Tibial artery (tissue), 4 donors: ENCODE measurements at regions of chr6 and their contacts with region 1.

Region 1: DNA sequence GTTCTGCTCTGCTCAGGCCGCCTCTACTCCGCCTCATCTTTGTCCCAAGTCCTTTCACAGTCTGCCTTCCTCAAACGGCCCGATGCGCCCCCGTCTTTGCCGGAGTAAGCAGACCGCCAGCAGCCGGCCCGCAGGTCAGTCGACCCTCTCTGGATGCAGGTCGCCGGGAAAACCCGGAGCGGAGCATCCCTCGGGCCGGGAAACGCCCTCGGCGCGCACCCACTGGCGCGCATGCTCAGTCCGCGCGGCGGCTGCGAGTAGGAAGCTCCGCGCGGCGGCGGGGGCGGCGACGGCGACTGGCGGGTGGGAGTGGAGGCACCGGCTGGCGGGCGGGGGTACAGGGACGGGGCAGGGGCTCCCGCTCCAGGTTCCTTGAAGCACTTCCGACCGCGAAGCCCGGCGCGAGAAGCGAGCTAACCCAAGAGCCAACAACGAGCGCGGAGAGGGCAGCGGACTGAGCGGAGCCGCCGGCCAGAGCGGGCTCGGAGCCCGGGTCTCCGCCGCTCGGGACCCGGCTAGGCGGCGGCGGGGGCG is at the start of gene LRRC1:
- DNase-seq: peak; percentile 88 to 94
- H3K4me3 ChIP-seq: peak within 1 kb of the TSS; percentile 83 to 92
- H3K27ac ChIP-seq: peak within 1 kb of the TSS; percentile 89
- H3K4me1 ChIP-seq: peaks cover 0 to 43% (median 17%) of the 10 kb centered on the region in 4 donors
- H3K27me3 ChIP-seq: no peaks in the 10 kb centered on the region
- CTCF ChIP-seq: no peak

Region 2: DNA sequence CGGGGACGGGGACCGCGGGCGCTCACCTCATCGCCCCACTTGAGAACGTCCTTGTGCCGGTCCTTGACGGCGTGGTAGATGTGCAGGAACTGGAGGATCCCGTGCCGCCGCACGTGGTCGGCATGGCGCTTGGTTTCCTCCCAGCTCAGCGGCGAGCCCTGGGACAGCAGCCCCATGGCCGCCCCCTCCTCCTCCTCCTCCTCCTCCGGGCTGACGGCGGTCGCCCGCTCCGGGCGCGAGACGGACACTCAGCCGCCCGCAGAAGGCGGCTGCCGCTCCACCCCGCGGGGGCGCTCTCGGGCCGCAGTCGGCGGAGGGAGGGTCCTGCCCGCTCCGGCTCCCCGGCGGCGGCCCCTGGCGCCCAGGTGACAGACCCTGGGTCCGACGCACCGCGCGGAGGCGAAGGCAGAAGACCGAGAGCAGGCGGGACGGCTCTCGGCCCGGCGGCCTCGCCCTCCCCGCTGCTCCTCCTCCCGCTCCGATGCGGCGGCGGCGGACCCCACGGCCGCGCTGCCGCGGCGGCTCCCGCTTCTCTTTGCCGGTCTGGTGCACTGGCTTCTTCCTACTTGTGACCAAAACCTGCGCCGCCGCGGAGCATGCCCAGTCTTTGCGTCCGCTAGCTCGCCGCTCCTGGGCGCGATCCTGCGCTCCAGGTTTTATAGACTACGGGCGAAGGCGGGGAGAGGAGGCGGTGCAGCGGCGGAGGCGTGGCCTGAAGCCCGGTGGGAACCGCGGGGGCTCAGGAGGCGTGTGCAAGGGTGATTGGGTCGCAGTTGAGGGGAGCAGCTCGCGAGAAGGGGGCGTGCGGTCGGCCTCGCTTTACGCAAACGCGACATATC is 250.1 kb before region 1 on chr6 and contains the start of gene GCLC:
- intact Hi-C with region 1: loop called (anchors 5 kb)
- DNase-seq: peak; percentile 96 to 97
- H3K4me3 ChIP-seq: peak within 1 kb of the TSS; percentile 80 to 97
- H3K27ac ChIP-seq: peak within 1 kb of the TSS; percentile 91 to 95
- H3K4me1 ChIP-seq: peaks cover 0 to 42% (median 19%) of the 10 kb centered on the region in 4 donors
- H3K27me3 ChIP-seq: no peaks in the 10 kb centered on the region
- CTCF ChIP-seq: peak; percentile 57 to 67

Region 3: GRCh38 chr6:53956804-53957203 is 162.0 kb after region 1 on chr6:
- intact Hi-C with region 1: loop called (anchors 1 kb)
- DNase-seq: no peak
- H3K4me3 ChIP-seq: no peak overlapping the region
- H3K27ac ChIP-seq: no peak overlapping the region
- H3K4me1 ChIP-seq: no peaks in the 10 kb centered on the region
- H3K27me3 ChIP-seq: no peaks in the 10 kb centered on the region
- CTCF ChIP-seq: no peak